ENCODE measurements at regions of chr18 and their contacts with region 1.

Region 1: DNA sequence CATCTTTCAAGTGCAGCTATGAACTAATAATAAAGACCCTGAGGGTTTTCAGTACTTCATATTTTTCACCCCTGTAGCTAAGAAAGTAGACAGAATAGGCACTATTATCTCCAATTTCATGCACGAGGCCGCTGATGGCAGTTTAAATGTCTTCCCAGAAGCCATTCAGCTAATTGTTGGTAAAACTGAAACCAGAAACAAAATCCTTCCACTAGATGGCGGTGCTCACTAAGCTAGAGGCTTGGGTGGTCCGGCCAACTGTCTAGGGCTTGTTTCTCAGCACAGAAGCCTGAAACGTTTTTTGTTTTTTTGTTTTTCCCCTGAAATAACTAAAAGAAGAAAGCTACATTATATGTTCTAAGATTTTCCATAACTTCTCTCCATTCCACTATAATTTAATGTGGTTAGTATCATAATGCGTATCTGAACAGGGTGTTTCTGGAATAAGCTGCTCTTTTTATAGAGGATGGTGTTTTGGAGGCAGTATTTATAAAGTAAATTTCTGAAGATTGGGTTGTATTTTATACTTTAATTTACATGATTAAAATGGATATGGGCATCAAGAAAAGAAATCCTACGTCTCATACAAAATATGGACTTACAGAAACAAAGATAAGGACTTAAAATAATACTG is 159.4 kb downstream of the PIK3C3 start:
- DNase-seq: peak in 9 of 10 donors; percentile 23 to 87 (median 59)
- H3K4me3 ChIP-seq: peak overlapping the region in 5 of 59 donors; percentile 2 to 30 (median 2)
- H3K27ac ChIP-seq: peak overlapping the region in 31 of 59 donors; percentile 1 to 84 (median 54)
- H3K27me3 ChIP-seq: no peaks in the 10 kb centered on the region
- CTCF ChIP-seq: peak; percentile 71 to 98 (median 91)

Region 2: GRCh38 chr18:42053188-42053781 is 61.1 kb before region 1 on chr18:
- intact Hi-C with region 1: loop called in 1 of 2 experiments (anchors 10 kb)
- DNase-seq: peak in 7 of 10 donors; percentile 35 to 72 (median 48)
- H3K4me3 ChIP-seq: peak overlapping the region in 23 of 59 donors; percentile 6 to 42 (median 28)
- H3K27ac ChIP-seq: peak overlapping the region in 8 of 59 donors; percentile 6 to 64 (median 28)
- H3K27me3 ChIP-seq: no peaks in the 10 kb centered on the region
- CTCF ChIP-seq: peak; percentile 79 to 99 (median 92)

Region 3: GRCh38 chr18:42242758-42243157 is 128.3 kb after region 1 on chr18:
- intact Hi-C with region 1: no loop called
- DNase-seq: no peak
- H3K4me3 ChIP-seq: no peak overlapping the region
- H3K27ac ChIP-seq: no peak overlapping the region
- H3K27me3 ChIP-seq: no peaks in the 10 kb centered on the region
- CTCF ChIP-seq: no peak

Region 4: DNA sequence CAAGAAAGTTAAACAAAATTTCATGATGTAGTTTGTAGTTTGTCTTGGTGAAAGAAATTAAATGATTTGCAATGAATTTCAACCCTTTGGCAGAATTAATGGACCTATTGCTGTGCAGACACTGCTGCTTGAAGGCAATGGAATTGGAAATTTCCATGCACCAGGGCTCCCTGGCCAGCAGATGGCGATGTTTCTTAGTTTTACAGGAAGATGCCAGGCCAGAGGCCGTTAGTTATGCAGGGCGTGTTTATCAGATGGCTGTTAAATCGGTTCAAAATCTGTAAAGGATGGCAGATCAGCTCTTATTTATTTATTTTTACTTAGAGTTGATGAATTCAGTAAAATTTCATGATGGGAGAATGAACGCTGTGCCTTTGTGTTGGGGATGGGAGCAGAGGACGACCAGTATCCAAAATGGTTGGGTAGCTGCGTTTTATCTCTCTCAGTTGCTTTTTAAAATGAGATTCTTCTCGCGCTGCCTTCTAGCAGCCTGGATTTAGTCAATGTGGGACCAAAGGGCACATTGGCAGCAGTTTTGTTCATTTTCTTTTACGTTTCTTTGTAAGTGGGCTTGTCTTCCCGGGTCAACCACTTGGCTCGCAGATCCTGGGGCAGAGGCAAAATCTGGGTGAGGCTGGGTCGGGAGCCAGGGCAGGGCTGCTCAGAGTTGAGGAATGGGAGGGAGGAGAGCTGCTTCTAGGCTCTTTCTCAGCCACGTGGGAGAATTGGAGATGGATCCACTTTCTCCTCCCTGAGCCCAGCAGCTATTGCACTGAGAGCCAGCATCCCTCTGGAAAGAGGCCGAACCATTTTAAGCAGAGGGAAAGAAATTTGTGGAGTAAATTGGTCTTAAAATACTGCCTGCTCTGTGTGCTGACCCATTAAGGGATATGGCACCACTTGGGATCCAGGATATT is 184.6 kb after region 1 on chr18:
- intact Hi-C with region 1: loop called (anchors 10 kb)
- DNase-seq: peak; percentile 82 to 97 (median 90)
- H3K4me3 ChIP-seq: peak overlapping the region; percentile 15 to 69 (median 50)
- H3K27ac ChIP-seq: peak overlapping the region in 57 of 59 donors; percentile 3 to 96 (median 78)
- H3K27me3 ChIP-seq: no peaks in the 10 kb centered on the region
- CTCF ChIP-seq: peak; percentile 80 to 99 (median 94)

Region 5: DNA sequence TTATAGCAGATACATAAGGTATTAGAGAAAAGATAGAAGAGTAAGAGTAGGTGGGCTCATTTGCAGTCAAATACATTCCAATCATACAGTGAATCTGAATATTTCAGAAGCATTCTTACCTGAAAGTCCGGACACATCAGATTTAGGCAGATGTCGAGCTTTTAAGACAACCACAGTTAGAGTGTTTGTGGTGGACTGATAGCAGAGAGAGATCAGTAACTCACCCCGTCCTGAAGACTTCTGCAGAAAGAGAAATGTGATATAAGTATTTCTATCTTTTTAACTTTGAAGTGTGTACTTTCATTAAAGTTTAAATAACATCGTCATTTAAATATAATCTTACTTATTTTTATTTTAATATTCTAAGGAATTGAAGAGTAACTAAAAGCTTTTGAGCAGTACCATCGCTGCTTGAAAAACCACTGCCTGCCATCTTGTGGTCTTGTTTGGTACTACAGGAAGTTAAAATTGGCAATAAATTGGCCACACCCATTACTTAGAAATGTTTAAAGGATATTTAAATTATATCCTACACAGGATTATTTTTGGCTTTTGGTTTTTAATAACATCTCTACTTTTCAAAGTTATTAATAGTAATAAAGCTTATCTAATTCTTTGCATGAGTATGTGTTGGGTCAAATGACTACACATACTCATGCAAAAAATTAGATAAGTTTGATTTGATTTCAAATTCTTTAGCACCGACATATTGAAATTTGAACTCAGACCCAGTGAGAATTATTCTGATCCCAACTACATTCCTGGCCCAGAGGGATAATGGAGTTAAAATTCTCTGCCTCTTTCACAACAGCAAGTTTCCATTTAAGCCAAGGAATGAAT is 1157.4 kb after region 1 on chr18:
- intact Hi-C with region 1: loop called (anchors 5 to 10 kb)
- DNase-seq: peak in 1 of 10 donors; percentile 33
- H3K4me3 ChIP-seq: peak overlapping the region in 20 of 59 donors; percentile 4 to 68 (median 34)
- H3K27ac ChIP-seq: no peak overlapping the region
- H3K27me3 ChIP-seq: peaks cover 0 to 25% (median 0%) of the 10 kb centered on the region in 45 donors
- CTCF ChIP-seq: peak; percentile 74 to 95 (median 87)

Region 6: DNA sequence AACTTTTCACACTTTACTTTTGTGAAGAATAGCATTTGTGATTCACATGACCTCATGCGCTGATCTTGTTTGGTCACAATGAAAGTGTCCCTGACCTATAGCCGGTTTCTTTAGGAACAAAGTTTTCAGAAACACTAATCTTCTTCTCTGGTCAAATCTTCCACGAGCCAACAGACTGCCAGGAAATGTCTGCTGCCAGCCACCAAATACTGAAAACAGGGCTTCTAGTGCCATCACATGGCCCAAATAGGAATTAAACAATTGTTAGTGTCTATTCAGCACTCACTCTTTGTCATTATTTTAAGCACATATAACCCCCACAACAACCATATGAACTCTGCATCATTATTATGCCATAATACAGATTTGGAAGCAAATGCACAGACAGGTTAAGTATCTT is 1449.4 kb after region 1 on chr18:
- intact Hi-C with region 1: loop called in 1 of 2 experiments (anchors 10 kb)
- DNase-seq: peak in 2 of 10 donors; percentile 31 to 52
- H3K4me3 ChIP-seq: no peak overlapping the region
- H3K27ac ChIP-seq: no peak overlapping the region
- H3K27me3 ChIP-seq: peaks cover 0 to 7% (median 0%) of the 10 kb centered on the region in 45 donors
- CTCF ChIP-seq: peak in 55 of 56 donors; percentile 18 to 78 (median 59)

Region 7: GRCh38 chr18:43587538-43588153 is 1473.2 kb after region 1 on chr18:
- intact Hi-C with region 1: loop called (anchors 5 to 10 kb)
- DNase-seq: peak in 1 of 10 donors; percentile 35
- H3K4me3 ChIP-seq: no peak overlapping the region
- H3K27ac ChIP-seq: no peak overlapping the region
- H3K27me3 ChIP-seq: no peaks in the 10 kb centered on the region
- CTCF ChIP-seq: peak; percentile 68 to 97 (median 83)

Measured in dorsolateral prefrontal cortex (tissue), 120 donors.